Thyroid gland (tissue), 4 donors: ENCODE measurements at regions of chr17 and their contacts with region 1.

Region 1: DNA sequence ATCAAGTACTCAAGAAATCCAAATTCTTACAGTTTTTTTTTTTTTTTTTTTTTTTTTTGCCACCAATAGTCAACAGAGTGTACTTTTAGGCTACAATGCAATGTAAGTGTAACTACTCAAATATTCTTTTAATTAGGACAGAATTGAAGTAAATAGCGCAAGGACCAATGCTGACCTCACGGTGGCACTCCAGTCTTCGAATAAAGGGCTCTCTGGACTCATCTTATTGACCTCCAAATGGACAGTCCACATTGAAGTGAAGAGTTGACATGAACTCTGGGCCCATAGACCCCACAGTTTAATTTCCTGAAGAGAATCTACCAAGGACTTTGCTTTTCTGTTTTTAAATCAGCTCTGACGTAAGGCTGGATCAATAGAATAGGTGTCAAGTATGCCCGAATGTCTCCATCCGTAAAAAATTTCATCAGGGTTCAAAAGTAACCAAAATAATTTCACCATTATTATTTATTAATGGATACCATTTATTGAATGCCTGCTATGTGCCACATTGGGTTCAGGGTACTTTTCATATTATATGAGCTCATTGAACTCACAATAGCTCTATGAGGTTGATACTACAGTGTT is 7.3 kb upstream of the DDX52 start:
- DNase-seq: peak; percentile 27 to 28
- H3K4me3 ChIP-seq: no peak overlapping the region
- H3K27ac ChIP-seq: no peak overlapping the region
- H3K4me1 ChIP-seq: peaks cover 18 to 23% of the 10 kb centered on the region in 2 donors
- H3K27me3 ChIP-seq: no peaks in the 10 kb centered on the region
- CTCF ChIP-seq: peak in 4 of 6 experiments; percentile 30 to 43 (median 39)
- POLR2A ChIP-seq: no peak

Region 2: DNA sequence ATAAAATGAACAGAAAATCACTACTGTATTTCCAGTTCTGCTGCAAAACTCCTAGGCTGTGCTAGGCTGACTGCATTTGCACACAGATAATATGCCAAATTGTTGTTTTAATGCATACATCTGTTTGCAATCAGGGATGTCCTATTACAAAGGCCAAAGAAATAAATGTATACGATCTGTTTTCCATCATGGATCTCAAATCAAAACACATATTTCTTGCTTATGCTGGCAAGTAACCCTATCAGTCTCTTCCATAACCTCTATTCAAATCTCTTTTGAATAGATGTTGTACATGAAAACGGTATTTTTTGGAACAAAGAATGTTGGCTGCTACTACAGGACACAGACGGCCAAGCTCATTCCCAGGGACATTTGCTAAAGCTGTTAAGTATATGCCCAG is 104.2 kb before region 1 on chr17:
- intact Hi-C with region 1: no loop called
- DNase-seq: no peak
- H3K4me3 ChIP-seq: no peak overlapping the region
- H3K27ac ChIP-seq: no peak overlapping the region
- H3K4me1 ChIP-seq: peaks cover 0 to 3% of the 10 kb centered on the region in 2 donors
- H3K27me3 ChIP-seq: no peaks in the 10 kb centered on the region
- CTCF ChIP-seq: no peak
- POLR2A ChIP-seq: no peak

Region 3: GRCh38 chr17:37710344-37710886 is 59.9 kb after region 1 on chr17:
- intact Hi-C with region 1: loop called (anchors 10 kb)
- DNase-seq: peak; percentile 34 to 49
- H3K4me3 ChIP-seq: no peak overlapping the region
- H3K27ac ChIP-seq: no peak overlapping the region
- H3K4me1 ChIP-seq: peaks cover 0 to 3% of the 10 kb centered on the region in 2 donors
- H3K27me3 ChIP-seq: no peaks in the 10 kb centered on the region
- CTCF ChIP-seq: no peak
- POLR2A ChIP-seq: no peak

Region 4: DNA sequence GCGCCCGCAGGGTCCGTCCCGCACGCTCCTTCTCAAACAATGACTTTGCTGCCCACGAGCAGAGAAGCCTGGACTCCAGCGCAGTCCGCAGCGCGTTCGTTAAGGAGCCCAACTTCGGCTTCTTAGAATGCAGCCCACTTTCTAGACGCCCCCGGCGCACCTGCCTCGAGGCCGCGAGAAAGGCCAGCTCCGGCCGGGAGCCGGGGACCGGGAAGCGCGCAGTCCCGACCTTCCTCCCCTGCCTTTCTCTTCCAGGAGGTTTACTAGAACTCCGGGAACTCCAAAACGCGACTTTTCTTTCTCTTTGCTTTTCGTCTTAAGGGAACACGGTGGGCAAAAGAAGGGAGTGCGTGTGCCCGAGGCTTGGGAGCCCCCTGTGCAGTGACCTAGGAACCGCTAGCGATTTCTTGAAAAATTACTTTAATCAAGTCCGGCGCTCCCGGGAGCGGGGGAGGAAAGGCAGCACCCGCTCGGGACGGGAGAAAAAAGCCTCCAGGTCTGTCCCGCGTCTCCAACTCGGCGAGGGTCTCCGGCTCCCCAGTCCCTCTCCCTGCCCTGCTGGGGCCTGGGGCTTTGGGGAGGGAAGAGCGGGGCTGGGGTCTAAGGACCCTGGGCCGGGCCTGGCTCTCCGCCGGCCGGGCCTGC is 91.7 kb after region 1 on chr17:
- intact Hi-C with region 1: no loop called
- DNase-seq: peak in 1 of 2 donors; percentile 18
- H3K4me3 ChIP-seq: peak overlapping the region in 1 of 3 donors; percentile 10
- H3K27ac ChIP-seq: no peak overlapping the region
- H3K4me1 ChIP-seq: peaks cover 18 to 33% of the 10 kb centered on the region in 2 donors
- H3K27me3 ChIP-seq: peaks cover 49% of the 10 kb centered on the region
- CTCF ChIP-seq: no peak
- POLR2A ChIP-seq: no peak

Region 5: DNA sequence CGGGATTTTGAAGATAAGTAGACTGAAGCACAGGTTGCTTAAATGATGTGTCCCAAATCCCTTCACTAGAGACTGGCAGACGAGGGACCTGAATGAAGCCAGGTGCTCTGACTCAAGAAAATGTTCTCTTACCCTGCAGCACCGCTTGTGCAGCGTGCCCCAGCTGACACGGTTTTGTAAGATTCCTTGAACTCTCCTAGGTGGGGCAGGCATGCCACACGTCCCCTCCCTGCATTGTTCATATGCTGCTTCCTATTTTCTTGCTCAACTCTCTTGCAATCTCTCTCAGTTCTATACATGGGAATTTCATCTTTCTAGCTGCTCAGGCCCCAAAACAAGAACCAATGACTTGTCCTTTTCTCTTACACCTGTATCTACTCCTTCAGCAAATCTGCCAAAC is 116.5 kb after region 1 on chr17:
- intact Hi-C with region 1: loop called (anchors 5 kb)
- DNase-seq: no peak
- H3K4me3 ChIP-seq: no peak overlapping the region
- H3K27ac ChIP-seq: no peak overlapping the region
- H3K4me1 ChIP-seq: no peaks in the 10 kb centered on the region
- H3K27me3 ChIP-seq: no peaks in the 10 kb centered on the region
- CTCF ChIP-seq: no peak
- POLR2A ChIP-seq: no peak